CD14-positive monocyte (primary cell): ENCODE measurements at regions of chr16 and their contacts with region 1.

Region 1: GRCh38 chr16:70800781-70801530 is at the start of gene VAC14:
- DNase-seq: peak; percentile 83 to 91 (median 85)
- H3K4me3 ChIP-seq: peak within 1 kb of the TSS; percentile 75 to 90 (median 83)
- H3K4me3 Mint-ChIP-seq: peak within 1 kb of the TSS; percentile 92 to 96
- H3K27ac ChIP-seq: peak within 1 kb of the TSS; percentile 91 to 93
- H3K27ac Mint-ChIP-seq: peak within 1 kb of the TSS; percentile 92 to 98 (median 97)
- H3K4me1 ChIP-seq: peaks cover 28 to 39% of the 10 kb centered on the region in 2 donors
- H3K4me1 Mint-ChIP-seq: peaks cover 51% of the 10 kb centered on the region
- H3K27me3 ChIP-seq: no peaks in the 10 kb centered on the region
- H3K27me3 Mint-ChIP-seq: peaks cover 0 to 3% (median 2%) of the 10 kb centered on the region in 3 donors
- CTCF ChIP-seq: no peak
- polyA plus RNA-seq, gene VAC14: 20.7 to 49.4 (median 31.1) TPM

Region 2: DNA sequence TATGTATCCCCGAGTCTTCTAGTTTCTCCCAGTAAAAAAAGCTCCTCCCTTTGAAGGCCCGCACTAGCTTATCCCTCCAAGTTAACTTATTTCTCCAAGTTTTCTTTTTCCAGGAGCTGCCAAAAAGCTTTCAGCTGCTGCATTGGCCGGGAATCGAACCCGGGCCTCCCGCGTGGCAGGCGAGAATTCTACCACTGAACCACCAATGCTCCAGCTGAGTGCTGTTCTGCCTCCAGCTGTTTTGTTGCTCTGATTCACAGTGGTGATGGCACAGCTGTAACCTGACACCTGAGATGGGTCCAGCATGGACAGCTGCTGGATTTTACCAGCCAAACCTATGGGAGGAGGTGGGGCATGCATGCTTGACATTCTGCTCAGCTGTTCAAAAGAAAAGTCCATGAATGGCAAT is 22.1 kb before region 1 on chr16:
- intact Hi-C with region 1: no loop called
- DNase-seq: no peak
- H3K4me3 ChIP-seq: no peak overlapping the region
- H3K4me3 Mint-ChIP-seq: no peak overlapping the region
- H3K27ac ChIP-seq: no peak overlapping the region
- H3K27ac Mint-ChIP-seq: peak overlapping the region in 1 of 7 donors; percentile 35
- H3K4me1 ChIP-seq: no peaks in the 10 kb centered on the region
- H3K4me1 Mint-ChIP-seq: no peaks in the 10 kb centered on the region
- H3K27me3 ChIP-seq: no peaks in the 10 kb centered on the region
- H3K27me3 Mint-ChIP-seq: peaks cover 0 to 2% (median 0%) of the 10 kb centered on the region in 3 donors
- CTCF ChIP-seq: no peak

Region 3: DNA sequence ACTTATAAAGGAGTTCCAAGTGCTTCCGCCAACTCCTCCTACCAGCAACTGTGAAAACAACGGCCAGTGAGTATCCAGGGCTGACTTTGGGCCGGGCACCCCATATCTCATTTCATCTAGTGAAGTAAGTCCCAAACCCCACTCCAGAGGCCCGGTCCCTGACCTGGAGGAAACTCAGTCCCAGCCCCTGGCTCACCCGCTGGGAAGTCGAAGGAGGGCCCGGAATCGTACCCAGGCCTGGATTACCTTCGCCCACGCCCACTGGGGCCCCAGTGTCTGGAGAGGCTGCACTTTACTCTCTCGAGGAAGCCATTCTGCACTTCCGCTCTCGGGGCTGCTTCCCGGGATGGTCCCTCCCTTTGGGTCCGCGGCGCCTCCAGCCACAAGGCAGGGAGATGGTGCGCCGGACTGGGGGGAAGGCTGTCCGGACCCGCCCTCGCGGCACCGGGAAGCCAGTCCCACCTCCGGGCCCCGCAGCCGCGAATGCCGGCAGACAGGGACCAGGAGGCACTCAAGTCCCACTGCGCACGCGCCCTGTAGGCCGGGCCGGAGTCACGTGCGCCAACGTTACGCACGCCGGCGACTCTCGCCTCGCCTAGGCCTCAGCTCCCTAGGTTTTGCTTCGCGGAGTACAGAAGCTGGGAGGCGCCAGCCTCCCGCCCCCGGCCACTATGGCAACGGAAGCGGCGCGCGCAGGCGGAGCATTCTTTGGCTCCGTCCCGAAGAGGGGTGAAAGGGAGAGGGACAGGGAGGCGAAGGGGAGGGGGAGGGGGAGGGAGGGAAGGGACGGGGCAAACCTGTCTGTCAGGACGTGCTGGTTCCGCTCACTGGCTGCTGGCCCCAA is 488.2 kb after region 1 on chr16 and contains the start of gene CMTR2:
- intact Hi-C with region 1: loop called in 1 of 2 experiments (anchors 10 kb)
- DNase-seq: peak; percentile 90 to 92 (median 90)
- H3K4me3 ChIP-seq: peak within 1 kb of the TSS; percentile 56 to 89 (median 68)
- H3K4me3 Mint-ChIP-seq: peak within 1 kb of the TSS; percentile 83 to 91
- H3K27ac ChIP-seq: peak within 1 kb of the TSS; percentile 79 to 90
- H3K27ac Mint-ChIP-seq: peak within 1 kb of the TSS; percentile 86 to 91 (median 90)
- H3K4me1 ChIP-seq: peaks cover 12% of the 10 kb centered on the region in 2 donors
- H3K4me1 Mint-ChIP-seq: peaks cover 20% of the 10 kb centered on the region
- H3K27me3 ChIP-seq: peaks cover 0 to 2% of the 10 kb centered on the region in 2 donors
- H3K27me3 Mint-ChIP-seq: peaks cover 6 to 15% (median 7%) of the 10 kb centered on the region in 3 donors
- CTCF ChIP-seq: no peak
- polyA plus RNA-seq, gene CMTR2: 4.3 to 12.7 (median 11.5) TPM